ENCODE measurements at regions of chr17 and their contacts with region 1.

Region 1: DNA sequence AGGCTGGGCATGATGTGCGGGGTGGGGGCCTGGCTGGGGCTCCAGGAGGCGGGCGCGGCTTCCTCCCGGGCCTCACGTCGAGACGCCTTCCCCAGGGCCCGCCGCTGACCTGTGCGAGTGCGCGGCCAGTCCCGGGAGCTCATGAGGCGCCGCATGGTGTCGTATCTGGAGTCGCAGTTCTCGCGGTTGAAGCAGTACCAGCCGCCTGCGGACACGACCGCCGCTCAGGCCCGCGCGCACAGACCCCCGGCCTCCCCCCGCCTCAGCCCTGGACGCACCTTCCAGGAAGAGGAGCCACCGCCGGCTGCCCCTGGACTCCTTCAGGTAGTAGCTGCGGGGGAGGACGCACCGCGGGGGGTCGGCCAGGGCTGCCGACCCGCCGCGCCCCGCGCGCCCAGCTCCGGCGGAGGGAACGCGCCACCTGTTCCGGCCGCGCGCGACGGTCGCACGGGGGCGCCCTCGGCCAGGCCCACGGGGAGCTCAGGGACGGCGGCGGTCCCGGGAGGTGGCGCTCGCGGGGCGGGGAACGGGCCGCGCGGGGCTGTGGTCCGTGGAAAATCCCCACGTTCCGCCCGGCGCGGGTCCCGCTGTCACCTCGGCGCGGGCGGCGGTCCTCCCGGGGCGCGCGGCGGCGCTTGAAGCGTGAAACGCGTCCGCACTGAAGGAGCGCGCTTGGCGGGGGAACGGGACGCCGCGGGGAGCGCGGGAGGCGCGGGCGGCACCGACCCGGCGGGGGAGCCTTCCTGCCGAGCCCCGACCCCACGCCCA is 1.4 kb downstream of the NOTUM start:
- DNase-seq: peak in 1 of 2 donors; percentile 67
- H3K4me3 ChIP-seq: peak overlapping the region in 1 of 2 donors; percentile 29
- H3K27ac ChIP-seq: no peak overlapping the region
- H3K4me1 ChIP-seq: peaks cover 0 to 20% of the 10 kb centered on the region in 2 donors
- H3K27me3 ChIP-seq: peaks cover 20 to 31% of the 10 kb centered on the region in 2 donors
- CTCF ChIP-seq: peak; percentile 40 to 99 (median 96)
- POLR2A ChIP-seq: peak in 1 of 2 donors; percentile 36

Region 2: GRCh38 chr17:81871387-81872230 is 87.9 kb before region 1 on chr17:
- intact Hi-C with region 1: no loop called
- DNase-seq: peak; percentile 93 to 94
- H3K4me3 ChIP-seq: peak overlapping the region; percentile 74 to 88
- H3K27ac ChIP-seq: peak overlapping the region; percentile 96 to 97
- H3K4me1 ChIP-seq: peaks cover 0 to 26% of the 10 kb centered on the region in 2 donors
- H3K27me3 ChIP-seq: no peaks in the 10 kb centered on the region
- CTCF ChIP-seq: peak in 3 of 4 experiments; percentile 39 to 66 (median 45)
- POLR2A ChIP-seq: peak; percentile 92 to 99

Region 3: DNA sequence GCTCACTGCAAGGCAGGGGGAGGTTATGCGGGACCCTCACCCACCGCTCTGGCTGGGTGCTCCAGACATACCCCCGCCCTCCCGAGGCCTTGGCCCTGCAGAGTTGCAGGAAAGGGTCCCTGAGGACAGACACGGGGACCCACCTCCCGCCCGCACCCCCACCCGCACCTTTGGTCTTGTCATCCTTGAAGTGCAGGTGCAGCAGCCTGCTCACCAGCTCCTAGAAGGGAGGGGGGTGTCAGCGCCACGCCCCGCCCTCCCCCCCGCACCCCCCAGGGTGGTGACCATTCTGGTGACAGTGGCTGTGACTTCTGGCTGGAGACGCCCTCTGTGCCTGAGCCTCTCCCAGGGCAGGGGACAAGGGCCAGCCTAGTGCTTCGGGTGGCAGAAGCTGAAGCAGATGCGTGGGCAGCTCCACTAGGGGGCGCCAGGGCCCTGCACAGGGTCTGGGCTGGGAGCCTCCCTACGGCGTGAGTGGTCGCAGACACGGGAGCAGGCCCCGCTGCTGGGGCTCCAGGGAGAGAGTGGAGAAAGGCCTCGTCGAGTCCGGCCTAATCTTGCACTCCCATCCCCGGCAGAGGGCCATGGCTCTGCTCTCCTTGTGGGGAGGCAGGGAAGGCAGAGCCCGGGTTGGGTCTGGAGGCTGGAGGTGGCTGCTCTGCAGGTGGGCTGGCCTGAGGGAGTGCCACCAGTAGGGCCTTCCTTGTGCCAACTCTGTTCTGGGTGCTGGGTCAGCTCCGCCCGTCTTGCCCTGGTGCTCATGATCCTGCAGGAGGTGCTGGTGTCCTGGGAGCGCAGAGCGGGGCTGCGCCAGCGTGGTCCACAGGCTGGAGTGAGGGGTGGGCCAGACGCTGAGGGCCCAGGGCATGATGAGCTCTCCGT is 60.4 kb after region 1 on chr17:
- intact Hi-C with region 1: loop called (anchors 5 kb)
- DNase-seq: no peak
- H3K4me3 ChIP-seq: no peak overlapping the region
- H3K27ac ChIP-seq: no peak overlapping the region
- H3K4me1 ChIP-seq: peaks cover 0 to 20% of the 10 kb centered on the region in 2 donors
- H3K27me3 ChIP-seq: no peaks in the 10 kb centered on the region
- CTCF ChIP-seq: peak; percentile 31 to 45 (median 36)
- POLR2A ChIP-seq: no peak

Measured in uterus (tissue), 4 donors.